ENCODE measurements at regions of chr14 and their contacts with region 1.

Region 1: DNA sequence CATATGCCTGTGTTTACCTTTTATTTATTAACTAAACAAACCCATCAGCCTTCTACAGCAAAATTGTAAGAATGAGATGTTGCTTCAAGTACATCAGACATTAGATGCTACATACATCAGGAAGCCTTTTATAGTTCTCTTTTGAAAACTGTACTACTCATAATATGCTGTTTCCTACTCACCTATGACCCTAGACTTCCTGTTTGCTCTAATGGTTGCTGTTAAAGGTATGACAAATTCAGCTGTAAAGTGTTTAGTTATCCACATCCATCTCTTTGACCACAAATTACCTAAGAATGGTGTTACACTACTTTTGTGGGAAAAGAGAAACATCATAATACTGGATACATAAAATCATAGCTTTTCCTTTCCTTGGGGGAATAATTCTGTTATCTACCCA is 220.0 kb downstream of the RAD51B start:
- DNase-seq: no peak
- ATAC-seq: no peak
- H3K4me3 ChIP-seq: no peak overlapping the region
- H3K27ac ChIP-seq: no peak overlapping the region
- H3K4me1 ChIP-seq: no peaks in the 10 kb centered on the region
- H3K27me3 ChIP-seq: no peaks in the 10 kb centered on the region
- CTCF ChIP-seq: no peak
- EP300 ChIP-seq: no peak
- POLR2A ChIP-seq: no peak
- RAD21 ChIP-seq: no peak

Region 2: DNA sequence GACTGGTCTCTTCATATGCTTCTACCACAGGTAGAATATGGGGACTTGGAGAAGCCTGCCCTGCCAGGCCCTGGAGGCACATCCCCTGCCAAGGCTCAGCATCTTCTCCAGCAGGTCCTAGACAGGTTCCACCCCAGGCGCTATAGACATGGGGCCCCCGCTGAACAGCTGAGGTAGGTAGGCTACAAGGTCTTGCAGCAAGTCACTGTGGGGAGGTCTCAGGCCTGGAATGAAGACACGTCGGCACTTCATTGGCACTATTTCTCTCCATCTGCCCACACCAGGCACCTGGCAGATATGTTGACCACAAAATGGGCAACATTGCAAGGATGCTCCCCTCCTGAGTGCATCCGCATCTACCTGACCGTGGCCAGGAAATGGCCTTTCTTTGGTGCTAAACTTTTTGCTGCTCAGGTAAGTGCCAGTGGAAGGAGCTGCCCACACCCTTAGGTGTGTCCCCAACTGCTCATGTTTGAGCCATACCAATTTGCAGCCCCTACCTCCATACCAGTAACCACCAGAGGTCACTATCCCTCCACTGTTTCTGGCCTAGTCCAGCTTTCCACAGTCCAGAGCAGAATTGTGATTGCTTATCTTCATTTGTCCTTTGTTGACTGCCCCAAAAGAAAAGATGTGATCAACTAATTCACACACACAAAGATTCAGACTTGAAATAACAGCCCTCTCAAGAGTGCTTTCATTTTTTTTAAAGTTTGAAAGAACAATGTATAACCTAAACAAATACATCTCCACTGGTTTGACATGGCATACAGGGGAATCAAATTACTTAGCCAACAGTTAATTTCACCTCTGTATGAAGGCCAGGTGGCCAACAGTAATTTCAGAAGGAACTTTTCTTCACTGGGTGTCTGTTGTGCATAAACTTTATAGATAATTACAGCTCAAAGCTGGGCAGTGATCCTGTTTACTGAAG is 455.6 kb before region 1 on chr14:
- CTCF ChIA-PET with region 1: no interaction called
- POLR2A ChIA-PET with region 1: no interaction called
- in situ Hi-C with region 1: loop called (anchors 10 kb)
- intact Hi-C with region 1: no loop called
- DNase-seq: peak; percentile 57 to 72 (median 66)
- ATAC-seq: peak; percentile 94
- H3K4me3 ChIP-seq: no peak overlapping the region
- H3K27ac ChIP-seq: no peak overlapping the region
- H3K4me1 ChIP-seq: peaks cover 0 to 6% of the 10 kb centered on the region in 2 experiments; a peak in 2 of 5 replicates
- H3K27me3 ChIP-seq: no peaks in the 10 kb centered on the region
- CTCF ChIP-seq: peak; percentile 72 to 83 (median 78)
- EP300 ChIP-seq: no peak
- POLR2A ChIP-seq: no peak
- RAD21 ChIP-seq: peak; percentile 90 to 94

Measured in K562 (cell line).